T-cell (primary cell): ENCODE measurements at regions of chr13 and their contacts with region 1.

Region 1: DNA sequence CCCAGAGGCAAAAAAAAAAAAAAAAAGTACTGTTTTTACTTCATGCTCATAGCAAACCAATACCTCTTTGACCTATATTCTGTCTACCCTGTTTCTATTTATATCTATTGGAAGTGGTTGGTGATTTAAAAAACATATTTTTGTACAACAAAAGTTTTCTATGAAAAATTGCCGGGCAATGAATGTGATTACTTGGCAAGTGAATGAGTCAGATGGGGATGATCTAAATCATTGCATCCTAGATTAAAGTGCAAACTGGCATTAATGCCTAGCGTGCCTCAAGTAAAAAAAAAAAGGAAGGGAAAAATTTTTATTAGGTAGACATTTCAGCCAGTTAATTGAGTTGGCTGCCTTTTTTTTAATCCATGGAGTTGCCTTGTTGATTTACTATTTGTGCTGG is 500.6 kb downstream of the KCTD12 start:
- DNase-seq: no peak
- ATAC-seq: no peak
- H3K4me3 ChIP-seq: no peak overlapping the region
- H3K4me3 Mint-ChIP-seq: no peak overlapping the region
- H3K27ac ChIP-seq: no peak overlapping the region
- H3K27ac Mint-ChIP-seq: no peak overlapping the region
- H3K4me1 ChIP-seq: no peaks in the 10 kb centered on the region
- H3K4me1 Mint-ChIP-seq: no peaks in the 10 kb centered on the region
- H3K27me3 ChIP-seq: no peaks in the 10 kb centered on the region
- H3K27me3 Mint-ChIP-seq: peaks cover 0 to 5% of the 10 kb centered on the region in 2 donors

Region 2: GRCh38 chr13:76398425-76398824 is 12.8 kb after region 1 on chr13:
- CTCF ChIA-PET with region 1: no interaction called
- POLR2A ChIA-PET with region 1: interaction called in 1 of 2 experiments, 15 read pairs
- DNase-seq: no peak
- ATAC-seq: no peak
- H3K4me3 ChIP-seq: no peak overlapping the region
- H3K4me3 Mint-ChIP-seq: no peak overlapping the region
- H3K27ac ChIP-seq: no peak overlapping the region
- H3K27ac Mint-ChIP-seq: peak overlapping the region in 1 of 2 donors; percentile 90
- H3K4me1 ChIP-seq: no peaks in the 10 kb centered on the region
- H3K4me1 Mint-ChIP-seq: peaks cover 0 to 11% (median 0%) of the 10 kb centered on the region in 3 donors
- H3K27me3 ChIP-seq: no peaks in the 10 kb centered on the region
- H3K27me3 Mint-ChIP-seq: peaks cover 0 to 9% of the 10 kb centered on the region in 2 donors

Region 3: GRCh38 chr13:77374786-77375185 is 989.2 kb after region 1 on chr13:
- CTCF ChIA-PET with region 1: no interaction called
- POLR2A ChIA-PET with region 1: no interaction called
- DNase-seq: no peak
- ATAC-seq: no peak
- H3K4me3 ChIP-seq: no peak overlapping the region
- H3K4me3 Mint-ChIP-seq: no peak overlapping the region
- H3K27ac ChIP-seq: no peak overlapping the region
- H3K27ac Mint-ChIP-seq: no peak overlapping the region
- H3K4me1 ChIP-seq: no peaks in the 10 kb centered on the region
- H3K4me1 Mint-ChIP-seq: peaks cover 0 to 5% (median 4%) of the 10 kb centered on the region in 3 donors
- H3K27me3 ChIP-seq: no peaks in the 10 kb centered on the region
- H3K27me3 Mint-ChIP-seq: no peaks in the 10 kb centered on the region